ENCODE measurements at regions of chr11 and their contacts with region 1.

Region 1: GRCh38 chr11:120108154-120108865 is 29.6 kb downstream of the TRIM29 start:
- DNase-seq: peak; percentile 71 to 97 (median 88)

Region 2: DNA sequence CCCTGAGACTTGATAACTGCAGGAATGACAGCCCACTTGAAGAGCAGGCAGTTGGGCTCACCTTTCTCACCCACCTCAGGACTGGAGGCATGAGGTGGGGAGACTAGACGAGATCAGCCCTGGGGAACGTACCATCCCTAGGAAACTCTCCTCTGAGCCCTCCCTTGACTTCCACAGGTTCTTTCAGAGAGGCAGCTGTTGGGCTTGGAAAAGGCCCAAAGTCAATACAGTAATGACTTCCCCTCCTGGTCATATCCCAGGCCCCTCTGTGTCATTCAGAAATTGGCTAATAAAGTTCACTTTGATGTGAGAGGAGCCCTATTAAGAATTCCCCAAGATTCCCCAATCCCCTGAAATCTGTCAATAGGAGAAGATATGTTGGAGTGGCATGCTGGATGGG is 373.5 kb before region 1 on chr11:
- intact Hi-C with region 1: loop called (anchors 2 kb)
- DNase-seq: peak in 1 of 10 donors; percentile 19

Region 3: DNA sequence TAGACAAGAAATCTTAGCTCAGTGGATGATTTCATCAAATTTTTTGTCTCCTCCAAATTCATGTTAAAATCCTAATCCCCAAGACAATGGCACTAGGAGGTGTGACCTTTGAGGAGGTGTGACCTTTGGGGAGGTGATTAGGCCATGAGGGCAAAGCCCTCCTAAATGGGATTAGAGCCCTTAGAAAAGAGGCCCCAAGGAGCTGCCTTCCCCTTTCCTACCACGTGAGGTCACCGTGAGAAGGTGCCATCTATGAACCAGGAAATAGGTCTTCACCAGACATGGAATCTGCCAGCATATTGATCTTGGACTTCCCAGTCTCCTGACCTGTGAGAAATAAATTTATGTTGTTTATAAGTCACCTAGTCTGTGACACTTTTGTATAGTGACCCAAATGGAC is 109.1 kb before region 1 on chr11:
- intact Hi-C with region 1: no loop called
- DNase-seq: peak in 1 of 10 donors; percentile 37

Region 4: GRCh38 chr11:120013325-120014270 is 94.7 kb before region 1 on chr11:
- intact Hi-C with region 1: loop called (anchors 2 kb)
- DNase-seq: peak; percentile 49 to 96 (median 74)

Region 5: GRCh38 chr11:120316842-120317688 is 208.8 kb after region 1 on chr11:
- intact Hi-C with region 1: no loop called
- DNase-seq: peak in 2 of 10 donors; percentile 23 to 75